Activated CD4-positive, alpha-beta T cell treated with anti-CD3 and anti-CD28 coated beads, Interleukin-2, amount 10 ng/mL, durations not matched to agents 24 days and 14 days (primary cell): ENCODE measurements at regions of chr4 and their contacts with region 1.

Region 1: DNA sequence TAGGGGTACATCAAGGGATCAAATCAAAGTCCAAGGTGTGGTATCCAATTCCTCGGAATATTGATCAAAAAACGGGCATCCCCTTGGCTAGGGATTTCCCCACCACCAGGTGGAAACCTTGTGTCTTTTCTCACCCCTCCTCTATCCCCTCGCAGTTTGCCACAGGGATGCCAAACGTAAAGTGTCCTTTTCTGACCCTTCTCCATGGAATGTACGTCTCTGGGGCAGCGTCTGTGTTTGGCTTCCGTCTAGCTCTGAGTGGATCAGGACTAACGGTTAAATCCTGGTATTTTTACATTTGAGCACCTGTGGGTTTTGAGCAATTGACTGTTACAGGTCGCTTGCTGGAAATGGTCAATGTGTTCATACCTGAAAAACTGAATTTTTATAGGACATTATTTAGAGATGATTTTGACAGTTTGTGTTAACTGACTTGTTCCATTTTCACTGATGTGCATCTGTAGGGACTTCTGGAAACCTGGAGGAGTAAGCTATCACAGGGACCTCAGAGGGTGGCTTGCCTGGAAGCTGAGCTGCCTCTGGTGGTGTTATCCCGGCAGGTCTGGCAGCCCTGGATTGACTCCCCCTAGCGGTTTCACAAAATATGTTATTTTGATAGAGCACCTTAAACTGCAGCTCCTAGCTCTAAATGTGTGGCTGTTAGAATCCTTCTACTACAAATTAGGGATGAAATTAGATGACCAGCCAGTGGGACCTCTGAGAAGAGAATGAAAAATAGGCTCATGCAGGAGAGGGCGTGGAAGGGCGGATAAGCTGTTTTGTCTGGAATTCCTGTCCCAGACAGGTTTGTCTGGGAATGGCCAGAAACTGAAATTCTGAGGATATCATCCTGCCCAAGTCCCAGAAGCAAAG is 8.8 kb upstream of the MGST2 start:
- DNase-seq: peak; percentile 84
- H3K4me3 Mint-ChIP-seq: peak overlapping the region; percentile 75
- H3K27ac Mint-ChIP-seq: peak overlapping the region; percentile 98
- H3K4me1 Mint-ChIP-seq: peaks cover 32% of the 10 kb centered on the region
- H3K27me3 Mint-ChIP-seq: peaks cover 5% of the 10 kb centered on the region

Region 2: DNA sequence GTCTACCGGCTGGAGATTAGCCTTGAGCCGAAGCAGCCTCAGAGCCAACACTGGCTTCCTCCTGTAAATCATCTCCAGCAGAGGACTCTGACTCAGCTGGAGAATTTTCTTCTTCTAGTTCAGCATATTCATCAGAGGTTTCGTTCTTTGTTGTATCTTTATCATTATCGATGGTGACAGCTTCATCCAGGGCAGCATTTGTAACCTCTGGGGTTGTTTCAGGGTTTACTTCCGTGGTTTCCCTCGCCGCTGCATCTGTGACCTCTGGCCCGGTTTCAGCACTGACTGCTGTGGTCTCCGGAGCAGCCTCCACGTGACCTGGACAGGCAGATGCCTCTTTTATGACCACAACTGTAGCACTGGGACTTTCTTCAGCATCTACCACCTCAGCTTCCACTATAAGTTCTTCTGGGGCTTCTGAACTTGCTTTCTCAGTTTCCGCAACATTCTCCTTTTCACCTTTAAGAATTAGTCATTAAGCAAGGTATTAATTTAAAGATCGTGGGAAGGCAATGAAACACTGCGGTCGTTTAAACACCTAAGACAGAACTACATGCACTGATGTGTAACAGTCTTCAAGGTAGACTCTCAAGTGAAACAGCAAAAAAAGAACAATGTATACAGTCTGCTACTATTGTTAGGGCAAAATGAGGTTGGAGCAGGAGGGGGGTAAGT is 390.1 kb before region 1 on chr4:
- intact Hi-C with region 1: loop called (anchors 2 kb)
- DNase-seq: peak; percentile 90
- H3K4me3 Mint-ChIP-seq: peak overlapping the region; percentile 68
- H3K27ac Mint-ChIP-seq: peak overlapping the region; percentile 78
- H3K4me1 Mint-ChIP-seq: peaks cover 21% of the 10 kb centered on the region
- H3K27me3 Mint-ChIP-seq: peaks cover 18% of the 10 kb centered on the region

Region 3: GRCh38 chr4:139700568-139700967 is 43.7 kb after region 1 on chr4:
- intact Hi-C with region 1: loop called (anchors 2 kb)
- DNase-seq: no peak
- H3K4me3 Mint-ChIP-seq: no peak overlapping the region
- H3K27ac Mint-ChIP-seq: no peak overlapping the region
- H3K4me1 Mint-ChIP-seq: peaks cover 5% of the 10 kb centered on the region
- H3K27me3 Mint-ChIP-seq: no peaks in the 10 kb centered on the region

Region 4: DNA sequence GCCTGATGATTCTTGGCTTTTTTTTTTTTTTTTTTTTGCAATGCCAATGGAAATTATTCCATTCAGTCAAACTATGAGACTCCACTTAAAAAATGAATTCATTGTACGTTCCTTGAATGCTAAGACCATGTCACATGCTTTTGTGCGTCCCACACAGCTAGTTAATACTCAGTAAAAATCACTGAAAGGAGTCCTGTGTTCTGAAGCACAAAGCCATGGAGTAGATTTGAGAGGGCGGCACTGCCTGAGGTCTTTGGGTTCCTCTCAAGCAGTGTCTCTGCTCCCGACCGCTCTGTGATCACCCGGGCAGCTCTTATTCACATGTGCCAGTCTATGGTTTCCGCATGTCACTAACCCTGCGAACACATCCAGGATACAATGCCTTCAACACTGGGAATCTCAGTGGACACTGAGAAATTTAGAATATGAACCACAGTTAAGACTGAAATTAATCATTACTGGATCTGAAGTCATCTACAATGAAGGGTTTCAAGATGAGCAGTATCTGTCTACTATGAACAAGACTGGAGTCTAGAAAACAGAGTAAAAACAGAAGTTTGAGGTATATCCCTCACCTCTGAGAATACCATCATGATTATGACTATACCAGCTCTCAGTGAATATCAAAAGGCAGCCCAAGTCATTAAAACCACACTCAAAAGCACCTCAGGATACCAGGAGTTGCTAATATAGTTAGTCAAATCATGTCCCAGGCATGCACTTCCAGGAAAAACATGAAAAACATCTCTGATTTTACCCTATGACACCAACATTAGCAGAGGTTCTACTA is 201.8 kb after region 1 on chr4:
- intact Hi-C with region 1: loop called (anchors 1 kb)
- DNase-seq: no peak
- H3K4me3 Mint-ChIP-seq: no peak overlapping the region
- H3K27ac Mint-ChIP-seq: peak overlapping the region; percentile 1
- H3K4me1 Mint-ChIP-seq: peaks cover 17% of the 10 kb centered on the region
- H3K27me3 Mint-ChIP-seq: peaks cover 24% of the 10 kb centered on the region

Region 5: DNA sequence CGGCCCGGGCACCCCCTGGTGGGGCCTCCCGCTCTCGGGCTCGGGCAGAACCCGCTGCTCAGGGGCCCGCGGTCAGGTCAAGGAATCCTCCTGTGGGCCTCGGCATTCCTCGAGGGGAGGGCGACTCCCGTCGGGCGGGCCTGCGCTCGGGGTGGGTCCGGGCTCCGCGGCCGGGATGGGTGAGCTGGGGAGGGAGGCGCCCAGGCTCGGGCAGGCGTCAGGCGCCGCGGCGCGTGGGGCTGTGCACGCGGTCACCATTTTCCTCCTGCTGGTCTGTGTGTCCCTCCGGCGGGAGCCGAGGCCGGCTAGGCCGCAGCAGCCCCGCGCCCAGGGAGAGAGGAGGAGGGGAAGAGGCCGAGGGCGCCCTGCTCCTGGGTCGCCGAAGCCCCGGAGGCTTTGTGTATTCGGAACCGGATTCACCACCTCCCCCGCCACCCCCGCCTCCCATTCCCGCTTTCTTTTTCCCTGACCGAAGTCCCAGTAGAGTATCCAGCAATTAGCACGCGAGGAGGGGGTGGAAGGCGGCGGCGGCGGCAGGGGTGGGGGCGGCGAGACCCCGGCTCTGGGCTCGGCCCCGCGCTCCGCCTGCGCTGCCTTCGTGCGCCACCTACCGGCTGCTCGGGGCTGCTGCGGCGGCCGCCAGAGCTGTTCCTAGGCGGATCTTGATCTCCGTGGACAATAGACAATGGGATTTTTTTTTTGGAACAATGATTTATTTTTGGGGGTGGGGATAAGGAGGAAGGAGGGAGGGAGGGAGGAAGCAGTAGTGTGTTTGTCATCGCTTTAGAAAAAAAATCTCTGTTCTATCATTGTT is 596.1 kb after region 1 on chr4:
- intact Hi-C with region 1: loop called (anchors 5 kb)
- DNase-seq: peak; percentile 89
- H3K4me3 Mint-ChIP-seq: peak overlapping the region; percentile 62
- H3K27ac Mint-ChIP-seq: no peak overlapping the region
- H3K4me1 Mint-ChIP-seq: peaks cover 28% of the 10 kb centered on the region
- H3K27me3 Mint-ChIP-seq: peaks cover 23% of the 10 kb centered on the region